ENCODE measurements at regions of chr16 and their contacts with region 1.

Region 1: DNA sequence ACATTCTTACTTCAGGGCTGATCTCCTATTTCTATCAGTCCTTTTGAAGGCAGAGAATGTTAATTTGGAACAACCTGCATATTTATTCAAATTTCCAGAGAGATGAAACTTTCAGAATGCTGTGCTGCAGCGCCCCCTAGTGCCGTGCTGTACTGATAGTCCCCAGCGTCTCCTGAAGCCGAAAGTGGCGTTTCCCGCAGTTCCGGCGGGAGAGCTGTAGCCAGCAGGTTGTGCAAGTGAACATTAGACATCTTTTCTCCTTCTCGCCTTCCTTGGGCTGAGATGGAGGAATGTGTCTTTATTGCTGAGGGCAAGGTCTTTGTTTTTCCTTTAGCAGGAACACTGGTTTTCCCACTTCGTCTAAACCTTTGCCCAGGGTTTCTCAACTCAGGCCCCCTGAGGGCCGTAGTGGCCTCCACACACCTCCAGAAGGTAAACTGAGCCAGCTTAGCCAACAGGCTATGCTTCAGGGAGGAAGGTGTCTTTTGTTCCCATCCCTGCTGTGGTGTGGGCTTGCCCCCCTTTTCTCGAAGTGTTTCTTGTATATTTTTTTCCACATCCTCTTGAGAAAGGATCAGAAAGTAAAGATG is 26.4 kb downstream of the USP10 start:
- DNase-seq: peak; percentile 94
- H3K4me3 Mint-ChIP-seq: peak overlapping the region; percentile 58
- H3K27ac Mint-ChIP-seq: peak overlapping the region; percentile 41
- H3K4me1 Mint-ChIP-seq: peaks cover 62% of the 10 kb centered on the region
- H3K27me3 Mint-ChIP-seq: no peaks in the 10 kb centered on the region

Region 2: GRCh38 chr16:84511180-84511824 is 214.9 kb before region 1 on chr16:
- intact Hi-C with region 1: loop called (anchors 5 kb)
- DNase-seq: peak; percentile 95
- H3K4me3 Mint-ChIP-seq: peak overlapping the region; percentile 10
- H3K27ac Mint-ChIP-seq: peak overlapping the region; percentile 77
- H3K4me1 Mint-ChIP-seq: peaks cover 58% of the 10 kb centered on the region
- H3K27me3 Mint-ChIP-seq: no peaks in the 10 kb centered on the region

Region 3: DNA sequence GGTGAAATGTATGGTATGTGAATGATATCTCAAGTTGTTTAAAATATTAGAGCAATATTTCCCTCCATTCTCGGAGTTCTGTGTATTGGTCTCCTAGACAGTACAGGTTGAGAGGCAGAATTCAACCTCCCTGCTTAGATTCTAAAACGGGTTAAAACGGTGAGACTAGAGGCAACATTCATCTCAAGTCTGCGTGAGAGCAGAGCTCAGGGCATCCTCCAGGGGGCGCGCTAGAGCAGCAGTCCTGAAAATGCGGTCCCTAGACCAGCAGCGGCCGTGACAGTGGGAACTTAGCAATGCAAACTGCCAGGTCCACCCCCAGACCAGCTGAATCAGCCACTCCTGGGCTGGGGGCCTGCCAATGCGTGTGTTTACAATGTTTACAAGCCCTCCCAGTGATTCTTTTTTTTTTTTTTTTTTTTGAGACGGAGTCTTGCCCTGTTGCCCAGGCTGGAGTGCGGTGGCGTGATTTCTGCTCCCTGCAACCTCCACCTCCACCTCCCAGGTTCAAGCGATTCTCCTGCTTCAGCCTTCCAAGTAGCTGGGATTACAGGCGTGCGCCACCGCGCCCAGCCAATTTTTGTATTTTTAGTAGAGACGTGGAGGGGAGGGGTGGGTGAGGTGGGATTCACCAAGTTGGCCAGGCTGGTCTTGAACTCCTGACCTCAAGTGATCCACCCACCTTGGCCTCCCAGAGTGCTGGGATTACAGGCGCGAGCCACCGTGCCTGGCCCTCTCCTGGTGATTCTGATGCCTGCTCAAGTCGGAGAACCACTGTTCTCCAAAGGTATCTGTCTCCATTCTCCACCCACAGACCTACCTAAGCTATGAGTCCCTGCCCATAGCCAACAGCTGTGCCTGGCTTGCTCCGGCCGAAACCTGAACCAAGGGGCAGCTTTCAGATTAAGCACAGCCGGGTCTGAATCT is 53.6 kb before region 1 on chr16:
- intact Hi-C with region 1: loop called (anchors 1 kb)
- DNase-seq: peak; percentile 94
- H3K4me3 Mint-ChIP-seq: no peak overlapping the region
- H3K27ac Mint-ChIP-seq: no peak overlapping the region
- H3K4me1 Mint-ChIP-seq: peaks cover 4% of the 10 kb centered on the region
- H3K27me3 Mint-ChIP-seq: peaks cover 4% of the 10 kb centered on the region

Region 4: DNA sequence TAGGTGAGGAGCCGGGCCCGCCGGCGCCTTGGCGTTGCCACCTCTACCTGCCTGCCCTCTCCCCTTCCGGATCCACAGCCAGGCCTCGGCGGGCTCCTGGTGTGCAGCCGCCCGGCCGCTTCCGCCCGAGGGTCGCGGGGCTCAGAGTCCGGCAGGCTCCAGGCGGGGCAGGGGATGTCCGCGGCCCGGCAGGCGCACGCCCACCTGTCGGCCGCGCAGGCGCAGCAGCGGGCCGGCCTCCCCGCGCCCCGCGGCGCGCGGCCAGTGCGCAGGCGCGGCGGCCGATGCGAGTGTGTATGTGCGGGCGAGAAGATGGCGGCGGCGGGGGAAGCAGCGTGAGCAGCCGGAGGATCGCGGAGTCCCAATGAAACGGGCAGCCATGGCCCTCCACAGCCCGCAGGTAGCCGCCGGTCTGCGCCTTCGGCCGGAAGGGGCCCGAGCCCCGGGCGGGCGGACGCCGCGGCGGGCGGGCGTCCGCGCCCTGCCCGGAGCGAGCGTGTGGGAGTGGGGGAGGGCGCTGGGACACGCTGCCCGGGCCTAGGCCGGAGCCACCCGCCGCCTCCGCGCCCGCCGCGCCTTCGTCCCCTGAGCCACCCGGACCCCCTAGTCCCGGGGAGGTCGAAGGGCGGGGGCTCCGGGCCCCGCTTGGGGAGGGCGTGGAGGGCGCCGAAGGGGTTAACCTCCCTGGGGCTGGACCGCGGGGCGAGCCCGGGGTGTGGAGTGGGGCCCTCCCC is 26.3 kb before region 1 on chr16 and contains the start of gene USP10:
- intact Hi-C with region 1: loop called (anchors 1 kb)
- DNase-seq: peak; percentile 97
- H3K4me3 Mint-ChIP-seq: peak within 1 kb of the TSS; percentile 90
- H3K27ac Mint-ChIP-seq: peak within 1 kb of the TSS; percentile 95
- H3K4me1 Mint-ChIP-seq: peaks cover 24% of the 10 kb centered on the region
- H3K27me3 Mint-ChIP-seq: no peaks in the 10 kb centered on the region
- total RNA-seq, gene USP10: 148 and 177 TPM in 2 replicates

Region 5: GRCh38 chr16:84841770-84842300 is 115.7 kb after region 1 on chr16:
- intact Hi-C with region 1: no loop called
- DNase-seq: no peak
- H3K4me3 Mint-ChIP-seq: no peak overlapping the region
- H3K27ac Mint-ChIP-seq: no peak overlapping the region
- H3K4me1 Mint-ChIP-seq: no peaks in the 10 kb centered on the region
- H3K27me3 Mint-ChIP-seq: peaks cover 20% of the 10 kb centered on the region